ENCODE measurements at regions of chr6 and their contacts with region 1.

Region 1: DNA sequence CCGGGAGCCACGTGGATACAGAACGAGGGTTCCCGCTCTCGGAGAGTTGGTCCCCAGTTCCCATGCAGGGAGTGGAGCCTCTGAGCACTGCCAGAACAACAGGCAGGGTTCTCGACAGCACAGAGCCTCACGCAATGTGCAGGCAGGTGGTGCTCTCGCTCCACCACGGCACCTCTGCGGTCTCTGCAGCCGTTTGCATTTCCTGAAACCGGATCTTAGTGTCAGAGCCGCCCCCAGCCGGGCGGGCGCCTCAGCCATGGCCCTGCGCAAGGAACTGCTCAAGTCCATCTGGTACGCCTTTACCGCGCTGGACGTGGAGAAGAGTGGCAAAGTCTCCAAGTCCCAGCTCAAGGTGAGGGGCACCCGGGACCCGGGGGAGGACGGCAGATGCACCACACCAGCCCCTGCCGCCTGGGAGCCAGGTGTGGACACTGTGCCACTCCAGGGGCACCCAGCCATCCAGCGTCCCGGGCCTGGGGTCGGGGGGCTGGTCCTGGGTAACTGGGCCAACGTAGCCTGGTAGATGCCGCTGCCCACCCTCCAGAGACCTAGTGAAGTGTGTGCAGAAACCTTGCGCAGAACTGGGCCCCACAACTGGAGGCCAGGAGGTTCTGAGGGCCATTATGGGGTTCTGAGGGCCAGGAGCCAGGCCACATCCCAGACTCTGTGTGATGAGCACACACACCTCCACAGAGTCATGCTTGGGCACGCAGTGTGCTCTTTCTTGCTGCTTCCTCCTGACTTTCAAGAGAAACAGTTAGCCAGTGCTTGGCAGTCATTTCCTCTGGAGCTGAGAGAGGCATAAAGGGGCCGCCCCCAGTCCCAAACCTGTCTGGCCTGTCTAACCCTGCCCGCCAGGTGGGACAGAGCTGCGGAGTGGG is at the start of gene DEF6:
- DNase-seq: peak; percentile 93
- CTCF ChIP-seq: peak; percentile 89

Region 2: DNA sequence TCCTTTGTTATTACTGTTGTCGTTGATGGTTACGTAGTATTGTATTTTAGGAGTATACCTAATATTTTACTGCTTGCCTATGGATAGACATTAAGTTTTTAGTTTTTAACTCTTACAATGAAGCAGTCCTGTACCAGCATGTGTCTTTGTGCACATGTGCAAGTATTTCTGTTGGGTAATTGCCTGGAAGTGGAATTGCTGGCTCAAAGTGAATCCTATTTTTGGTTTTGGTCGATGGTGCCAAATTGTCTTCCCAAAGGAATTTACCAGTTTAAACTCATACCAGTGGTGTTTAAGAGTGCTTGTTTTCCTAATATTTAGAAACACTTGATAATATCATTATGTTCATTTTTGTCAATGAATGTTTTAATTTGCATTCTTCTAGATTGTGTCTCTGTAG is 333.3 kb before region 1 on chr6:
- CTCF ChIA-PET with region 1: no interaction called
- POLR2A ChIA-PET with region 1: no interaction called
- DNase-seq: no peak
- CTCF ChIP-seq: no peak

Region 3: DNA sequence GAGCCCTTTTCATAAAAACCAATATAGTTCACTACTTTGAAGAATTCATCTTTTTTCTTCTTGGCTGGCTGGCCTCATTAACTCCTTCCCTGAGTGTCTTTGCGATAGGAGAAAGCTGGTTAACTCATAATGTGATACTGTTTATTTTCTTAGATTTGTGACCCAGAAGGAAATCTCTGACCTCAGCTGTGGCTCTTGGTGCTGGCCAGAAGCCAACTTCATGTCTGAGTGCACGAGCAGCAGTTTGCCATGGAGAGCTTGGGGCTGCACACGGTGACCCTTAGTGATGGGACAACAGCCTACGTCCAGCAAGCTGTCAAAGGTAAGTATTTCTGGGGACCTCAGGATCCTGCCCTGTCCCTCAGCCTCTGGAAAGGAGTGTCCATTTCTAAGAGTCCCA is 16.9 kb before region 1 on chr6:
- CTCF ChIA-PET with region 1: interaction called, 45 read pairs
- POLR2A ChIA-PET with region 1: interaction called, 3 read pairs
- DNase-seq: no peak
- CTCF ChIP-seq: no peak

Region 4: DNA sequence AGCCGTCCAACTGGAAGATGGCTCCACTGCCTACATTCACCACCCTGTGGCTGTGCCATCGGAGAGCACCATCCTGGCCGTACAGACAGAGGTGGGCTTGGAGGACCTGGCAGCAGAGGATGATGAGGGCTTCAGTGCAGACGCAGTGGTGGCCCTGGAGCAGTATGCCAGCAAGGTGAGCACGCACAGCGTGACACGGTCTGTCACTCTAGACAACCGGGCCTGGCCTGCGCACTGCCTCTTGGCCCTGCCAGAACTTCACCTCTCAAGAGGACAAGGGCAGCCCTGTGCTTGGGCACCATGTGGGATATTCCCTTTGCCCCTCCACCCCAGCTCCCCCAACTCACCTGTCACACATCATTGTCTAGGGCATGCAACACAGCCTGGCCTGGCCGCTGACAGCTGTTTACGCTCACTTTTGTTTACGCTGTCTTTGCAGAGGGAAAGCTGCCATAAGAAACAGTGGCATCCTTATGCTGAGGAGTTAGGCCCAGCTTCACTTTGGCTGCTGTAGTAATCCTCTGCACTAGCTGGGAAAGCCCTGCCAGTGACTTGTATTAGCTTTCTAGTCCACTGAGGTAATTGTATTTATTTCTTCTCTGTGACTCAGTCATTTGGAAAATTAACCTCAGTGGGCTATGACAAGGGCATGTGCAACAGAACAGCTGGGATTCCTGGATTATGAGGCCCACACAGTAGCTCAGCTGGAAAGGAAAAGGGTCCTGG is 10.0 kb before region 1 on chr6:
- CTCF ChIA-PET with region 1: interaction called, 45 read pairs
- POLR2A ChIA-PET with region 1: interaction called, 3 read pairs
- DNase-seq: no peak
- CTCF ChIP-seq: no peak

Region 5: GRCh38 chr6:35327349-35328027 is 29.6 kb after region 1 on chr6:
- CTCF ChIA-PET with region 1: interaction called, 198 read pairs
- POLR2A ChIA-PET with region 1: no interaction called
- DNase-seq: peak; percentile 81
- CTCF ChIP-seq: peak; percentile 75

Region 6: DNA sequence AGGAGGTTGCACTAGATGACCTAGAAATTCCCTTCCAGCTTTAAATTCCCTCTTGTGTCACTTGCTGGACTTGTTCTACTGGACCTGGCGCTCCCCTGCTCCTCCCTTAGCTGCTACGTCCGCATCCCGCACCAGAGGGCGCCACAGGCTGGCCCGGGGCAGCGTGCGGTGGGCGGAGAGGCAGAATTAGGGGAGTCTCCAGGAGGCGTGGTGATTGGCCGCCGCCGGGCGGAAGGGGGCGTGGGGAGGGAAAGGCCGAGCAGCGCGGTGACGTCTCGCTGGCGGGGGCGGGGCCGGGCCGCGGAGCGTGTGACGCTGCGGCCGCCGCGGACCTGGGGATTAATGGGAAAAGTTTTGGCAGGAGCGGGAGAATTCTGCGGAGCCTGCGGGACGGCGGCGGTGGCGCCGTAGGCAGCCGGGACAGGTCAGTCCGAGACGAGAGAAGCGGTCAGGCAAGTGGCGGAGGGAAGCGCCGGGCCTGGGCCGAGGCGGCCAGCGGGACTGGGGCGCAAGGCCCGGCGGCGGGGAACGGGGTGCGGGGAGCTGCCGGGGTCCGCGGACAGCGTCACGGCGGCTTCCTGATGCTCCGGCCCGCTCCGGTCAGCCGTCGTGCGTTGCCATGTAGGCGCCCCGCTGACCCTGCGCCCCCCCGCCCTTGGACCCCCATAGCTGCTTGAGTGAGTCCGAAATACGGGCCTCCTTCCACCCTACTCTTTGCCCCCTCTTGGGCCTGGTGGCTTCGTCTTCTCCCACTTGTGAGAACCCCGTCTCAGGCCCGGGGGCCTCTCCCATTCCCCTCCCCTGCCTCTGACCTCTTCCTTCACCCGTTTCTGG is 44.6 kb after region 1 on chr6 and contains the start of gene PPARD:
- CTCF ChIA-PET with region 1: interaction called, 198 read pairs
- POLR2A ChIA-PET with region 1: no interaction called
- DNase-seq: peak; percentile 100
- CTCF ChIP-seq: peak; percentile 98

Region 7: GRCh38 chr6:35452186-35453090 is 154.6 kb after region 1 on chr6 and contains the start of gene FANCE:
- CTCF ChIA-PET with region 1: interaction called, 98 read pairs
- POLR2A ChIA-PET with region 1: no interaction called
- DNase-seq: peak; percentile 98
- CTCF ChIP-seq: no peak

Region 8: GRCh38 chr6:35468181-35468979 is 170.5 kb after region 1 on chr6 and contains the start of gene RPL10A:
- CTCF ChIA-PET with region 1: interaction called, 22 read pairs
- POLR2A ChIA-PET with region 1: interaction called, 5 read pairs
- DNase-seq: peak; percentile 98
- CTCF ChIP-seq: peak; percentile 97

Region 9: GRCh38 chr6:35503534-35503933 is 205.7 kb after region 1 on chr6:
- CTCF ChIA-PET with region 1: no interaction called
- POLR2A ChIA-PET with region 1: no interaction called
- DNase-seq: no peak
- CTCF ChIP-seq: no peak

Measured in GM10248 (cell line).